Heart right ventricle (tissue), 16 donors: ENCODE measurements at regions of chr6 and their contacts with region 1.

Region 1: GRCh38 chr6:2931970-2932748 is 29.1 kb upstream of the SERPINB9 start:
- DNase-seq: peak; percentile 70 to 86
- ATAC-seq: peak; percentile 87 to 97 (median 95)
- H3K4me3 ChIP-seq: peak overlapping the region in 3 of 10 donors; percentile 10 to 30 (median 25)
- H3K27ac ChIP-seq: peak overlapping the region in 8 of 10 donors; percentile 0 to 56 (median 44)
- H3K4me1 ChIP-seq: peaks cover 0 to 9% (median 5%) of the 10 kb centered on the region in 9 donors
- H3K27me3 ChIP-seq: no peaks in the 10 kb centered on the region
- CTCF ChIP-seq: peak in 8 of 9 donors; percentile 85 to 99 (median 98)

Region 2: GRCh38 chr6:2783188-2783963 is 148.8 kb before region 1 on chr6:
- intact Hi-C with region 1: loop called in 2 of 10 experiments (anchors 10 kb)
- DNase-seq: no peak
- ATAC-seq: peak in 1 of 8 donors; percentile 27
- H3K4me3 ChIP-seq: no peak overlapping the region
- H3K27ac ChIP-seq: no peak overlapping the region
- H3K4me1 ChIP-seq: peaks cover 0 to 34% (median 18%) of the 10 kb centered on the region in 9 donors
- H3K27me3 ChIP-seq: no peaks in the 10 kb centered on the region
- CTCF ChIP-seq: no peak

Region 3: GRCh38 chr6:2791124-2791974 is 140.8 kb before region 1 on chr6:
- intact Hi-C with region 1: loop called in 9 of 10 experiments (anchors 1 to 10 kb)
- DNase-seq: peak; percentile 38 to 77
- ATAC-seq: peak; percentile 78 to 92 (median 90)
- H3K4me3 ChIP-seq: peak overlapping the region in 2 of 10 donors; percentile 5 to 10
- H3K27ac ChIP-seq: peak overlapping the region; percentile 29 to 87 (median 72)
- H3K4me1 ChIP-seq: peaks cover 6 to 57% (median 36%) of the 10 kb centered on the region in 9 donors
- H3K27me3 ChIP-seq: no peaks in the 10 kb centered on the region
- CTCF ChIP-seq: peak; percentile 54 to 89 (median 79)

Region 4: GRCh38 chr6:2848851-2849250 is 83.3 kb before region 1 on chr6:
- intact Hi-C with region 1: loop called in 9 of 10 experiments (anchors 1 to 10 kb)
- DNase-seq: no peak
- ATAC-seq: no peak
- H3K4me3 ChIP-seq: no peak overlapping the region
- H3K27ac ChIP-seq: no peak overlapping the region
- H3K4me1 ChIP-seq: peaks cover 6 to 34% (median 22%) of the 10 kb centered on the region in 9 donors
- H3K27me3 ChIP-seq: no peaks in the 10 kb centered on the region
- CTCF ChIP-seq: no peak

Region 5: DNA sequence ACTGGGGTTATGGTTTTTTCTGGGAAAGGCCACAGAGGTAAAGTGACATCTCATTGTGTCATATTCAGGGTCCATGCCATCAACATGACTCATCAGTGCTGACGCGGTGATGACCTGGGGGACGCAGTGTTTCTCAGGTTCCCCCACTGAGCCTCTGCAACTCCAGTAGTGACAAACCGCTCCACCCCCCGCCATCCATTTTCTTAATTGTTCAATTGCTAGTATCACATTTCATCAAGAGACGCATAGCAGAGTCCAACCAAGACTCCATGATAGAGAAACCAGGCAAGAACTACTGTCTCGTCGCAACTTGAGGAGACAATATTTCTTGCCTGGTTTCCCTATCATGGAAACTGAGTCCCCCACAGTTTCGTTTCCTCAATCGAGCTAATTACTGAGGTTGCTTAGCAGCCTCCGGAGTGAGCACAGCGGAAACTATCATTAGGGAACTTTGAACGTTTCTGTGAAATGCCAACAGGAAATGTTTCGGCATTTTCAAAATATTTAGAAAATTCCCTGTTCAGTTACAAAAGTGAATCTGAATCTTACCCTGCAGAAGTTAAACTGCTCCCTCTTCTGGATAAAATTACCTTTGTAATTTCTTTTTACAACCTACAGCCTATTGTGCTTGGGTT is 78.3 kb before region 1 on chr6:
- intact Hi-C with region 1: loop called in 3 of 10 experiments (anchors 2 to 10 kb)
- DNase-seq: no peak
- ATAC-seq: peak in 7 of 8 donors; percentile 21 to 44 (median 35)
- H3K4me3 ChIP-seq: peak overlapping the region in 9 of 10 donors; percentile 7 to 52 (median 40)
- H3K27ac ChIP-seq: peak overlapping the region; percentile 57 to 95 (median 78)
- H3K4me1 ChIP-seq: peaks cover 14 to 71% (median 49%) of the 10 kb centered on the region in 9 donors
- H3K27me3 ChIP-seq: no peaks in the 10 kb centered on the region
- CTCF ChIP-seq: peak in 6 of 9 donors; percentile 36 to 65 (median 56)

Region 6: GRCh38 chr6:3088446-3088845 is 156.3 kb after region 1 on chr6:
- intact Hi-C with region 1: no loop called
- DNase-seq: no peak
- ATAC-seq: peak in 6 of 8 donors; percentile 33 to 79 (median 53)
- H3K4me3 ChIP-seq: no peak overlapping the region
- H3K27ac ChIP-seq: peak overlapping the region in 4 of 10 donors; percentile 8 to 65 (median 27)
- H3K4me1 ChIP-seq: peaks cover 0 to 15% (median 0%) of the 10 kb centered on the region in 9 donors
- H3K27me3 ChIP-seq: no peaks in the 10 kb centered on the region
- CTCF ChIP-seq: no peak

Region 7: GRCh38 chr6:3239110-3239830 is 307.1 kb after region 1 on chr6:
- intact Hi-C with region 1: no loop called
- DNase-seq: no peak
- ATAC-seq: no peak
- H3K4me3 ChIP-seq: no peak overlapping the region
- H3K27ac ChIP-seq: no peak overlapping the region
- H3K4me1 ChIP-seq: no peaks in the 10 kb centered on the region
- H3K27me3 ChIP-seq: peaks cover 0 to 45% (median 21%) of the 10 kb centered on the region in 7 donors
- CTCF ChIP-seq: no peak